Transverse colon (tissue), 4 donors: ENCODE measurements at regions of chr15 and their contacts with region 1.

Region 1: GRCh38 chr15:91861223-91861622 is 7.7 kb downstream of the SLCO3A1 start:
- DNase-seq: no peak
- H3K4me3 ChIP-seq: no peak overlapping the region
- H3K27ac ChIP-seq: no peak overlapping the region
- H3K4me1 ChIP-seq: peaks cover 0 to 34% (median 10%) of the 10 kb centered on the region in 4 donors
- H3K27me3 ChIP-seq: no peaks in the 10 kb centered on the region
- CTCF ChIP-seq: no peak
- EP300 ChIP-seq: no peak
- POLR2A ChIP-seq: no peak

Region 2: DNA sequence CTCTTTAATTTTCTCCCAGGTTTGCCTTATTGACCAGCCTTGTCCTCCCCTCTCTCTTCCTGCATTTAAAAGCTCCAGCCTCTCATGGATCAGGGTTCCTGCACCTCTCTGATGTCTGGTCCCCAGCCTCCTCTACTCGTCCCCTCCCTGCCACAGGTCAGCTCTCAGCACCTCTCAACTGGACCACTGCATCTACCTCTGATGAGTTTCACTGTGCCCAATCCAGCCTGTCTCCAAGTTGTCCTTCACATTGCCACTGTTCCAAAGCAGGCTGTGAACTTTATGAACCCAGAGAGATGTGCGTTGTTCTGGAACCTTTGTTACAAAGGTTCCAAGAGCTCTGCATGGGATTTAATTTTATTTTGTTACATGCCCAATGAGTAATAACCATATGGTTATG is 68.9 kb after region 1 on chr15:
- in situ Hi-C with region 1: no loop called
- intact Hi-C with region 1: loop called (anchors 2 kb)
- DNase-seq: no peak
- H3K4me3 ChIP-seq: no peak overlapping the region
- H3K27ac ChIP-seq: no peak overlapping the region
- H3K4me1 ChIP-seq: peaks cover 13 to 42% (median 26%) of the 10 kb centered on the region in 4 donors
- H3K27me3 ChIP-seq: no peaks in the 10 kb centered on the region
- CTCF ChIP-seq: no peak
- EP300 ChIP-seq: no peak
- POLR2A ChIP-seq: no peak

Region 3: DNA sequence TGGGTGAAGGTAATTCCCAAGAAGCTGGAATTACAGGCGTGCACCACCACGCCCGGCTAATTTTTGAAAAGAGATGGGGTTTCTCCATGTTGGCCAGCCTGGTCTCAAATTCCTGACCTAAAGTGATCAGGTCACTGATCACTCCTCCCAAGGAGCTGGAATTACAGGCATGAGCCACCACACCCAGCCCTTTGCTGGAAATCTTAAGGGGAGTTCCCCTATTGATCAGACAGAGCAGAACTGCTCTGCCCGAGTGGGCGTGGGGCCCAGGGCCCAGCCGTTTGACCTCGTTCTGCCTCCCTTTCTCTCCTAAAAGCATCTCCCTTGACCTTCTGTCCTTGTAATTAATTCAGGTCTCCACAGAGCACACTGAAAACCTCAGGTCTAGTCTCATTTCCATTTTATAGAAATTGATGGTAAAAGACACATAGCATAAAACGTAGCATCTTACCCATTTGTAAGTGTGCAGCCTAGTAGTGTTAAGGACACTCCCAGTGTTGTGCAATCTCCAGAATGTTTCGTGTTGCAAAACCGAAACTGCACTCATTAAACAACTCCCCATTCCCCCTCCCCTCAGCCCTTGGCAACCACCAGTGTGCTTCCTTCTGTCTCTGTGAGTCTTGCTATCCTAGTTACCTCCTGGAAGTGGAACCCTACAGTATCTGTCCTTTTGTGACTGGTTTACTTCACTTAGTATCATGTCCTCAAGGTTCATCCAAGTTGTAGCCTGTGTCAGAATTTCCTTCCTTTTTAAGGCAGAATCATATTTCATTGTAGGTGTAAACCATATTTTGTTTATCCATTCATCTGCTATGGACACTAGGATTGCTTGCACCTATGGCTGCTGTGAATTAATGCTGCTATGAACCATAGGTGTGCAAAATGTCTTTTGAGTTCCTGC is 81.7 kb after region 1 on chr15:
- in situ Hi-C with region 1: no loop called
- intact Hi-C with region 1: no loop called
- DNase-seq: peak; percentile 84
- H3K4me3 ChIP-seq: peak overlapping the region in 1 of 4 donors; percentile 17
- H3K27ac ChIP-seq: peak overlapping the region; percentile 77 to 86 (median 81)
- H3K4me1 ChIP-seq: peaks cover 9 to 63% (median 39%) of the 10 kb centered on the region in 4 donors
- H3K27me3 ChIP-seq: no peaks in the 10 kb centered on the region
- CTCF ChIP-seq: no peak
- EP300 ChIP-seq: no peak
- POLR2A ChIP-seq: no peak